GM12878 (cell line): ENCODE measurements at regions of chr1 and their contacts with region 1.

Region 1: GRCh38 chr1:160238408-160238807 is 23.9 kb downstream of the DCAF8 start:
- DNase-seq: no peak
- ATAC-seq: no peak
- H3K4me3 ChIP-seq: no peak overlapping the region
- H3K27ac ChIP-seq: no peak overlapping the region
- H3K4me1 ChIP-seq: peaks cover 4% of the 10 kb centered on the region; the same call in 1 of the 2 replicates
- H3K27me3 ChIP-seq: no peaks in the 10 kb centered on the region
- CTCF ChIP-seq: no peak
- EP300 ChIP-seq: no peak
- POLR2A ChIP-seq: no peak
- RAD21 ChIP-seq: no peak

Region 2: DNA sequence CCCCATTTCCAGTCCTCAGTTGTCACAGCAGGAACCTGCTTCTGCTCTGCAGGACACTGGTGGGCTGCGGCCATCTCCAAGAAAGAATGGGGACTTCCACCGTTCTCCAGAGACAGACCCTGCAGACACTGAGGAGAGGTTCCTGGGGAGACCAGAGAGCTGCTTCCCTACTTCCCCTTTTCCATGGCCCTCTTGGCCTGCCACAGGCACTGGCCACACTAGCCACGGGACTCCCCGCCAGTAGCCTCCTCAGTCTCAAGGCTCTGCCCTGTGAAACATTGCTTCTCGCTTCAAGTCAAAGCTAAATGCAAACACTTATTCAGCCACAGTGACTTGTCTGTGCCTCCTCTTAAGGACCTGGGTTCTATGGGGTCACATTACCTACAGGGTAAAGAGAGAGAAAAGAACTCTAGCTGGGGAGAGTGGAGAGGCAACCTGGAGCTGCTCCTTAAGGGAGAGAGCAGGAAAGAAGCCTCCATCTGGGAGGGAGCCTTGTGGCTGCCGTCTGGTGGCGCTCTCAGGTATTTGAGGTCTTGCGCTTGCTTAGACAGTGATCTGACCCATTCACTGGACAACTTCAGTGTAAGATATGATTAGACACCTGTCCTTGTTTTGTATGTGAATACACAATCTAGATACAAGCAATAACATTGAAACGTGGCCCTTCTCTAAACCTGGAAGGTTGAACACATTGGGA is 417.1 kb before region 1 on chr1:
- CTCF ChIA-PET with region 1: no interaction called
- POLR2A ChIA-PET with region 1: no interaction called
- RAD21 ChIA-PET with region 1: no interaction called
- SMC1A ChIA-PET with region 1: no interaction called
- in situ Hi-C with region 1: no loop called
- intact Hi-C with region 1: no loop called
- DNase-seq: no peak
- ATAC-seq: peak; percentile 74
- H3K4me3 ChIP-seq: no peak overlapping the region
- H3K27ac ChIP-seq: no peak overlapping the region
- H3K4me1 ChIP-seq: peaks cover 6% of the 10 kb centered on the region
- H3K27me3 ChIP-seq: peaks cover 0 to 4% of the 10 kb centered on the region in 2 experiments; a peak in 2 of 4 replicates
- CTCF ChIP-seq: peak; percentile 53 to 68 (median 66)
- EP300 ChIP-seq: no peak
- POLR2A ChIP-seq: no peak
- RAD21 ChIP-seq: peak; percentile 30; the same call in 1 of the 2 replicates

Region 3: GRCh38 chr1:160179336-160179735 is 59.1 kb before region 1 on chr1:
- CTCF ChIA-PET with region 1: no interaction called
- POLR2A ChIA-PET with region 1: no interaction called
- RAD21 ChIA-PET with region 1: no interaction called
- SMC1A ChIA-PET with region 1: no interaction called
- in situ Hi-C with region 1: no loop called
- intact Hi-C with region 1: no loop called
- DNase-seq: no peak
- ATAC-seq: no peak
- H3K4me3 ChIP-seq: no peak overlapping the region
- H3K27ac ChIP-seq: no peak overlapping the region
- H3K4me1 ChIP-seq: no peaks in the 10 kb centered on the region
- H3K27me3 ChIP-seq: no peaks in the 10 kb centered on the region; a peak in 1 of 4 replicates
- CTCF ChIP-seq: no peak
- EP300 ChIP-seq: no peak
- POLR2A ChIP-seq: no peak
- RAD21 ChIP-seq: no peak

Region 4: DNA sequence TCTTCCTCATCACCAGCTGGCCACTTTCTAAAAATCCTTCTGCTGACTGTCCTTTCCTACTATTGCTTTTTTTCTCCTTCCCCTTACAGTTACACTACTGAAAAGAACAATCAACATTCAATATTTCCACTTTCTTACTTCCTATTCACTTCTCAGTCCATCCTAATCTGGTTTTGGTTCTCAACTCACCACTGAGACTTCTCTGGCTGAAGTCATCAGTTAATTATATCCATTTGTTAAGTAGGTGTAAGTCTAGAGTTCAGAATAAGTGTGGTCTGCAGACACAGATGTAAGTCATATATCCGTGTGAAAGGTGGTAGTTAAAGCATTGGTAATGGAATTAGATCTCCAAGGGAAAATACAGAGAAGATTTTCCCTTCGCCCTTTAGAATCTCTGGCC is 11.8 kb before region 1 on chr1:
- CTCF ChIA-PET with region 1: interaction called, 6 read pairs
- POLR2A ChIA-PET with region 1: interaction called, 4 read pairs
- RAD21 ChIA-PET with region 1: no interaction called
- SMC1A ChIA-PET with region 1: interaction called, 16 read pairs
- in situ Hi-C with region 1: no loop called
- intact Hi-C with region 1: no loop called
- DNase-seq: no peak
- ATAC-seq: peak; percentile 47
- H3K4me3 ChIP-seq: no peak overlapping the region
- H3K27ac ChIP-seq: no peak overlapping the region
- H3K4me1 ChIP-seq: no peaks in the 10 kb centered on the region; the same call in 1 of the 2 replicates
- H3K27me3 ChIP-seq: no peaks in the 10 kb centered on the region
- CTCF ChIP-seq: no peak
- EP300 ChIP-seq: no peak
- POLR2A ChIP-seq: no peak
- RAD21 ChIP-seq: no peak

Region 5: GRCh38 chr1:160342953-160343869 is 104.8 kb after region 1 on chr1 and contains the starts of genes COPA and NCSTN:
- CTCF ChIA-PET with region 1: no interaction called
- POLR2A ChIA-PET with region 1: no interaction called
- RAD21 ChIA-PET with region 1: no interaction called
- SMC1A ChIA-PET with region 1: no interaction called
- in situ Hi-C with region 1: no loop called
- intact Hi-C with region 1: no loop called
- DNase-seq: peak; percentile 75
- ATAC-seq: peak; percentile 90
- H3K4me3 ChIP-seq: peak within 1 kb of the TSS; percentile 96
- H3K27ac ChIP-seq: peak within 1 kb of the TSS; percentile 97
- H3K4me1 ChIP-seq: peaks cover 23% of the 10 kb centered on the region
- H3K27me3 ChIP-seq: no peaks in the 10 kb centered on the region
- CTCF ChIP-seq: no peak
- EP300 ChIP-seq: no peak
- POLR2A ChIP-seq: peak; percentile 96
- RAD21 ChIP-seq: no peak
- polyA plus RNA-seq, gene COPA: 53.7 to 70.6 TPM
- polyA plus RNA-seq, gene NCSTN: 33.3 to 41.6 TPM